Mammary epithelial cell (primary cell): ENCODE measurements at regions of chr22 and their contacts with region 1.

Region 1: GRCh38 chr22:41966607-41967240 is 2.5 kb upstream of the SEPTIN3 start:
- DNase-seq: peak; percentile 87
- H3K4me3 ChIP-seq: no peak overlapping the region
- H3K27ac ChIP-seq: no peak overlapping the region
- H3K4me1 ChIP-seq: peaks cover 7% of the 10 kb centered on the region
- H3K27me3 ChIP-seq: no peaks in the 10 kb centered on the region
- CTCF ChIP-seq: peak; percentile 45 to 52

Region 2: GRCh38 chr22:42070517-42071422 is 104.0 kb after region 1 on chr22 and contains the start of gene NAGA:
- CTCF ChIA-PET with region 1: interaction called, 10 read pairs
- dilution Hi-C with region 1: no loop called
- in situ Hi-C with region 1: no loop called
- intact Hi-C with region 1: no loop called
- DNase-seq: peak; percentile 94
- H3K4me3 ChIP-seq: peak within 1 kb of the TSS; percentile 32 to 49 (median 42)
- H3K27ac ChIP-seq: peak within 1 kb of the TSS; percentile 19
- H3K4me1 ChIP-seq: peaks cover 20% of the 10 kb centered on the region
- H3K27me3 ChIP-seq: no peaks in the 10 kb centered on the region
- CTCF ChIP-seq: no peak
- total RNA-seq, gene NAGA: 15.8 to 23.5 TPM

Region 3: GRCh38 chr22:42169055-42169469 is 202.3 kb after region 1 on chr22:
- CTCF ChIA-PET with region 1: no interaction called
- dilution Hi-C with region 1: no loop called
- in situ Hi-C with region 1: no loop called
- intact Hi-C with region 1: loop called (anchors 1 kb)
- DNase-seq: peak; percentile 17
- H3K4me3 ChIP-seq: no peak overlapping the region
- H3K27ac ChIP-seq: no peak overlapping the region
- H3K4me1 ChIP-seq: peaks cover 20% of the 10 kb centered on the region
- H3K27me3 ChIP-seq: no peaks in the 10 kb centered on the region
- CTCF ChIP-seq: peak; percentile 70 to 77

Region 4: DNA sequence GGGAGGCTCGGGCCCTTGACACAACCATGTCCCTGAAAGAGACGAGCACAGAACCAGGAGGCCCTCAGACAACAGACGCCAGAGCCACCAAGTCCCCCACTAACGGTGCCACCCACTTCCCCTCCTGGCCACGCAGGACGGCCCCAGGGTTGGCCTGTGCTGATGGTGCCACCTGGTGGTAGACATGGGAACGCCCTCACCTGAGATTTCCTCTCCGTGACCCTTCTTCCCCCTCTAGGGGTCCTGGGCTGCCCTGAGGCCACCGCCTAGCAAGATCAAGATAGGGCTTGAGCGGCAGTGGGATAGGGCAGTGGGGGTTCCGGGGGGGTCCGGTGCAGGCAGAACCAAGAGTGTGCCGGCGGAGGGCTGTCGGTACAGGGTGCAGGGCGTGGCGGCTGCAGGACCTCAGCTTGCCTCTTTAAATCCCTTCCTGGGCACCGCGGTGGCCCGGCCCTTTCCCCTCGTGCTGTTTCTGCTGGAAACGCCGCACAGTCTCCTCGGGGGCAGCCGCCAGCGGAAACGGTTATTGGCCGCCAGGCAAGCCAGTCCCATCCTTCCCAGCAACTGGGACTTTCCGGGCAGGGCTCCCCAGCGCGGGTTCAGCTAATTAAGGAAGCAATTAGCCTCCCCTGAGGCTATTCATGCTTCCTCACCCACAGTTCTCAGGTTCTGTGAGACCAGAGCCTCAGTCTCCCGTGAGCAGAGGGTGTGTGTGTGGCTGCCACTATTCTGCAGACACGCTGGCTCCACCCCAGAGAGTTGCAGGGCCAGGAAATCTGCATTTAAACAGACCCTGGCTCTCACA is 471.0 kb after region 1 on chr22:
- CTCF ChIA-PET with region 1: no interaction called
- dilution Hi-C with region 1: no loop called
- in situ Hi-C with region 1: loop called (anchors 10 kb)
- intact Hi-C with region 1: loop called (anchors 1 kb)
- DNase-seq: peak; percentile 52
- H3K4me3 ChIP-seq: peak overlapping the region; percentile 48 to 69 (median 54)
- H3K27ac ChIP-seq: no peak overlapping the region
- H3K4me1 ChIP-seq: peaks cover 35% of the 10 kb centered on the region
- H3K27me3 ChIP-seq: no peaks in the 10 kb centered on the region
- CTCF ChIP-seq: peak; percentile 92 to 99

Region 5: GRCh38 chr22:42473484-42474193 is 506.9 kb after region 1 on chr22:
- CTCF ChIA-PET with region 1: no interaction called
- dilution Hi-C with region 1: no loop called
- in situ Hi-C with region 1: loop called in 1 of 2 experiments (anchors 10 kb)
- intact Hi-C with region 1: loop called (anchors 10 kb)
- DNase-seq: peak; percentile 53
- H3K4me3 ChIP-seq: no peak overlapping the region
- H3K27ac ChIP-seq: no peak overlapping the region
- H3K4me1 ChIP-seq: no peaks in the 10 kb centered on the region
- H3K27me3 ChIP-seq: no peaks in the 10 kb centered on the region
- CTCF ChIP-seq: peak; percentile 71 to 83